Activated CD4-positive, alpha-beta T cell treated with anti-CD3 and anti-CD28 coated beads, Interleukin-2, amount 10 ng/mL, durations not matched to agents 24 days and 14 days (primary cell): ENCODE measurements at regions of chr7 and their contacts with region 1.

Region 1: GRCh38 chr7:127392566-127393367 is at the start of gene ZNF800:
- DNase-seq: peak; percentile 96
- H3K4me3 Mint-ChIP-seq: peak within 1 kb of the TSS; percentile 97
- H3K27ac Mint-ChIP-seq: peak within 1 kb of the TSS; percentile 98
- H3K4me1 Mint-ChIP-seq: peaks cover 49% of the 10 kb centered on the region
- H3K27me3 Mint-ChIP-seq: no peaks in the 10 kb centered on the region
- total RNA-seq, gene ZNF800: 40.9 and 42.2 TPM in 2 replicates

Region 2: DNA sequence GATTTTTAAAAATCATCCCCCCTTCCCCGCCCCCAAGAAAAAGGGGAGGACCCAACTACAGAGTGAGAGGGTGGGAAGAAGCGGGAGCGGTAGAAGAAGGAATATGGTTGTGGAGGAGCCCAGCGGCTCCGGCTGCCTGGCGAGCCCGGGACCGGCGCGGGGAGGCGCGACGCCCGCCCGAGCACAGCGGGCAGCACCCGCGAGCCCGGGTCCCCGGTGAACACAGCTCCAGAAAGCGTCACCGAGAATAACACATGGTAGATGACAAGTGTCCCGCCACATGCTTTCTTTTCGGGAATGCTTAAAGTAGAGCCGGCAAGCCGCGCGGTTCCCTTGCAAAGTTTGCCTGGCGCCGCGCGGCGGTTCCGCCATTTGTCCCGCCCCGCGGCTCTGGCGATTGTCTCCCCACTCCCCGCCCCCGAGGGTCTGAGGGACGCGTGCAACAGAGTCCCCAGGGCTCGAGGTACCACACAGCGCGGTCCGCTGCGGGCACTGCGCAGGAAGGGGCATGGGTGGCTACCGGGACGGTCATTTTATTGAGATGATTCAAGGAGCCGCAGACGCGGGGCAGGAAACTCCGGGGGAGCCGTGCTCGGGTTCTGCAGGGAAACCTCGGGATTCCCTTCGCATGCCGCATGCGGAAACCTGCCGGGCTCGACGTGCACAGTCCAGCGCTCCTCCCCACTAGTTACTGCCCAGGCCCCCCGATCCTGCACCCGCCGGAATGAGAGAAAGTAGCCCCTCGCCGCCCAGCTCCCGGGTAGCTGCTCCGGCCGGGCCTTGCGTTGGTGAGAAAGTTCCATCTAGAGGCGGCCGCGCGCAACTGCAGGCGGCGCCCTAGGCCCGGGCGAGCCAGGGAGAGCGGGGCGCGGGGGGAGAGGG is 139.2 kb before region 1 on chr7:
- intact Hi-C with region 1: loop called (anchors 5 kb)
- DNase-seq: peak; percentile 88
- H3K4me3 Mint-ChIP-seq: peak overlapping the region; percentile 87
- H3K27ac Mint-ChIP-seq: no peak overlapping the region
- H3K4me1 Mint-ChIP-seq: peaks cover 7% of the 10 kb centered on the region
- H3K27me3 Mint-ChIP-seq: peaks cover 75% of the 10 kb centered on the region

Region 3: GRCh38 chr7:127375631-127376030 is 17.1 kb before region 1 on chr7:
- intact Hi-C with region 1: loop called (anchors 2 kb)
- DNase-seq: no peak
- H3K4me3 Mint-ChIP-seq: no peak overlapping the region
- H3K27ac Mint-ChIP-seq: no peak overlapping the region
- H3K4me1 Mint-ChIP-seq: peaks cover 30% of the 10 kb centered on the region
- H3K27me3 Mint-ChIP-seq: no peaks in the 10 kb centered on the region

Region 4: GRCh38 chr7:127404286-127405072 is 11.7 kb after region 1 on chr7:
- intact Hi-C with region 1: no loop called
- DNase-seq: no peak
- H3K4me3 Mint-ChIP-seq: peak overlapping the region; percentile 10
- H3K27ac Mint-ChIP-seq: no peak overlapping the region
- H3K4me1 Mint-ChIP-seq: peaks cover 7% of the 10 kb centered on the region
- H3K27me3 Mint-ChIP-seq: peaks cover 17% of the 10 kb centered on the region

Region 5: GRCh38 chr7:127447326-127447945 is 54.7 kb after region 1 on chr7:
- intact Hi-C with region 1: loop called (anchors 1 kb)
- DNase-seq: peak; percentile 89
- H3K4me3 Mint-ChIP-seq: no peak overlapping the region
- H3K27ac Mint-ChIP-seq: no peak overlapping the region
- H3K4me1 Mint-ChIP-seq: peaks cover 6% of the 10 kb centered on the region
- H3K27me3 Mint-ChIP-seq: peaks cover 47% of the 10 kb centered on the region

Region 6: GRCh38 chr7:127651556-127652332 is 259.0 kb after region 1 on chr7 and contains the start of gene SND1:
- intact Hi-C with region 1: loop called (anchors 2 kb)
- DNase-seq: peak; percentile 100
- H3K4me3 Mint-ChIP-seq: peak within 1 kb of the TSS; percentile 99
- H3K27ac Mint-ChIP-seq: peak within 1 kb of the TSS; percentile 97
- H3K4me1 Mint-ChIP-seq: peaks cover 31% of the 10 kb centered on the region
- H3K27me3 Mint-ChIP-seq: peaks cover 6% of the 10 kb centered on the region
- total RNA-seq, gene SND1: 275 and 295 TPM in 2 replicates